Activated CD4-positive, alpha-beta T cell treated with anti-CD3 and anti-CD28 coated beads, Interleukin-2, amount 10 ng/mL, durations not matched to agents 24 days and 14 days (primary cell): ENCODE measurements at regions of chrX and their contacts with region 1.

Region 1: GRCh38 chrX:21839334-21840192 is at the start of gene MBTPS2:
- DNase-seq: peak; percentile 94
- H3K4me3 Mint-ChIP-seq: peak within 1 kb of the TSS; percentile 93
- H3K27ac Mint-ChIP-seq: peak within 1 kb of the TSS; percentile 96
- H3K4me1 Mint-ChIP-seq: peaks cover 9% of the 10 kb centered on the region
- H3K27me3 Mint-ChIP-seq: no peaks in the 10 kb centered on the region
- total RNA-seq, gene MBTPS2: 10.0 and 11.3 TPM in 2 replicates

Region 2: DNA sequence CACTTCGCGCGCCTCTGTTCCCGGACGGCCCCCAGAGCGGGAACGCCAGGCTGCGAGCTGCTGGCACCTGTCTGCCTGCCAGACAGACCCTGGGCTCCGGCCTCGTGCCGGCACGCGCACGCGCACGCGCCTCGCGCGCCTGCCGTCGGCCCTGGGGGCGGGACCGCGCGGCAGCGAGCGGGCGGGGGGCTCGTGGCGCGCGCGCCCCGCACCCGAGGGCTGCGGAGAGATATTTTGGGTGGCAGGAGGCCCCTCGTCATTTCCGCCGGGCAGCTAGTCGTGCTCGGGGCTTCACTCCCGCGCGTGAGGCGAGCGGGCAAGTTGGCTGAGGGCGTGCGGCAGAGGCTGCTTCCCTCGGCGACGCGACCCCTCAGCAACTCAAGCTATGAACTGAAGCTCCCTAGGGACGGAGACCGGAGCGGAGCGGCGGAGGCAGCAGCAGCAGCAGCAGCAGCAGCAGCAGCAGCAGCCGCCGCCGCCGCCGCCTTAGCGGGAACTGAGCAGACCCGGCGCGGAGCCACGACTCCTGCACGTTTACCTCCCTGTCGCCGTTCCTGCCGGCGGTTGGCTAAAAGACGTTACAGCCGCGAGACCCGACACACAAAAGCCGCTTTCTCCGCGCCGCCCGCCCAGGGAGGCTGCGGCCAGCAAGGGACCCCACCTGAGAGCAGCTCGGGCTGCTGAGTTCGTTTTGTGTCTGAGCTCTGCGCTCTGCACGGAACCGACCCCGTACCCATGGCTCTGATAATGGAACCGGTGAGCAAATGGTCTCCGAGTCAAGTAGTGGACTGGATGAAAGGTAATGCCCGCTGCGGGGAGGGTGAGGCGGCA is 465.2 kb before region 1 on chrX and contains the start of gene CNKSR2:
- intact Hi-C with region 1: loop called (anchors 10 kb)
- DNase-seq: peak; percentile 90
- H3K4me3 Mint-ChIP-seq: peak within 1 kb of the TSS; percentile 94
- H3K27ac Mint-ChIP-seq: peak within 1 kb of the TSS; percentile 83
- H3K4me1 Mint-ChIP-seq: peaks cover 13% of the 10 kb centered on the region
- H3K27me3 Mint-ChIP-seq: peaks cover 5% of the 10 kb centered on the region
- total RNA-seq, gene CNKSR2: 7.1 and 10.2 TPM in 2 replicates

Region 3: GRCh38 chrX:21932292-21932996 is 92.9 kb after region 1 on chrX:
- intact Hi-C with region 1: loop called (anchors 2 kb)
- DNase-seq: no peak
- H3K4me3 Mint-ChIP-seq: no peak overlapping the region
- H3K27ac Mint-ChIP-seq: peak overlapping the region; percentile 64
- H3K4me1 Mint-ChIP-seq: peaks cover 29% of the 10 kb centered on the region
- H3K27me3 Mint-ChIP-seq: no peaks in the 10 kb centered on the region

Region 4: DNA sequence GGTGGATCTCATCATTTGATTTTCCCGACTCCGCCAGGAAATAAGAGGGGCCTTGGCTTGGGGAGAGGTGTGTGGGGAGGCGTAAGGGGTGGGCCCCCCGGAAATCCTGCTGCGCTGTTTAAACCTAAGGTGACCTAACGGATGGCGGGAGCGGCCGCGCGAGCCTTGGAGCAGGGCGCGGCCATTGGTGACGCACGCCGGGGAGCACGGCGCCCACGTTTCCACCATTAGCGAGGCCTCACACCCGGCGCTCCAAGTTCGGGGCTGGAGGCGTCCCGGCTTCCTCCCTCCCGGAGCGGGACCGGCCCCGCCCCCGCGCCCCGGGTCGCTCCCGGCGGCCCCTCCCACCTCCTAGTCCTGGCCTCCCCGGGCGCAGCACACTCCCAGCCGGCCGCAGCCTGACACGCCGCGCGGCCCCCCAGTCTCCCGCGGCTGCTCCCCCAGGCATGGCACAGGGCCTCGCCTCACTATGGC is 100.8 kb after region 1 on chrX and contains the start of gene SMS:
- intact Hi-C with region 1: loop called (anchors 1 kb)
- DNase-seq: peak; percentile 81
- H3K4me3 Mint-ChIP-seq: peak within 1 kb of the TSS; percentile 90
- H3K27ac Mint-ChIP-seq: peak within 1 kb of the TSS; percentile 91
- H3K4me1 Mint-ChIP-seq: peaks cover 19% of the 10 kb centered on the region
- H3K27me3 Mint-ChIP-seq: no peaks in the 10 kb centered on the region
- total RNA-seq, gene SMS: 161 and 162 TPM in 2 replicates

Region 5: GRCh38 chrX:21972721-21973120 is 133.2 kb after region 1 on chrX:
- intact Hi-C with region 1: loop called (anchors 1 kb)
- DNase-seq: peak; percentile 81
- H3K4me3 Mint-ChIP-seq: peak overlapping the region; percentile 25
- H3K27ac Mint-ChIP-seq: peak overlapping the region; percentile 85
- H3K4me1 Mint-ChIP-seq: peaks cover 34% of the 10 kb centered on the region
- H3K27me3 Mint-ChIP-seq: no peaks in the 10 kb centered on the region

Region 6: GRCh38 chrX:22748093-22748999 is 908.8 kb after region 1 on chrX:
- intact Hi-C with region 1: no loop called
- DNase-seq: peak; percentile 75
- H3K4me3 Mint-ChIP-seq: no peak overlapping the region
- H3K27ac Mint-ChIP-seq: no peak overlapping the region
- H3K4me1 Mint-ChIP-seq: no peaks in the 10 kb centered on the region
- H3K27me3 Mint-ChIP-seq: no peaks in the 10 kb centered on the region